Endothelial cell of umbilical vein (primary cell): ENCODE measurements at regions of chr6 and their contacts with region 1.

Region 1: GRCh38 chr6:137799950-137800568 is 67.0 kb upstream of the TNFAIP3 start:
- DNase-seq: peak; percentile 68
- H3K4me3 ChIP-seq: no peak overlapping the region
- H3K27ac ChIP-seq: no peak overlapping the region
- H3K4me1 ChIP-seq: no peaks in the 10 kb centered on the region
- H3K27me3 ChIP-seq: no peaks in the 10 kb centered on the region
- CTCF ChIP-seq: peak; percentile 53 to 66
- POLR2A ChIP-seq: no peak

Region 2: GRCh38 chr6:137775720-137776119 is 24.3 kb before region 1 on chr6:
- CTCF ChIA-PET with region 1: interaction called, 10 read pairs
- POLR2A ChIA-PET with region 1: no interaction called
- dilution Hi-C with region 1: no loop called
- intact Hi-C with region 1: no loop called
- DNase-seq: peak; percentile 94
- H3K4me3 ChIP-seq: no peak overlapping the region
- H3K27ac ChIP-seq: peak overlapping the region; percentile 56
- H3K4me1 ChIP-seq: peaks cover 23% of the 10 kb centered on the region
- H3K27me3 ChIP-seq: no peaks in the 10 kb centered on the region
- CTCF ChIP-seq: no peak
- POLR2A ChIP-seq: no peak

Region 3: DNA sequence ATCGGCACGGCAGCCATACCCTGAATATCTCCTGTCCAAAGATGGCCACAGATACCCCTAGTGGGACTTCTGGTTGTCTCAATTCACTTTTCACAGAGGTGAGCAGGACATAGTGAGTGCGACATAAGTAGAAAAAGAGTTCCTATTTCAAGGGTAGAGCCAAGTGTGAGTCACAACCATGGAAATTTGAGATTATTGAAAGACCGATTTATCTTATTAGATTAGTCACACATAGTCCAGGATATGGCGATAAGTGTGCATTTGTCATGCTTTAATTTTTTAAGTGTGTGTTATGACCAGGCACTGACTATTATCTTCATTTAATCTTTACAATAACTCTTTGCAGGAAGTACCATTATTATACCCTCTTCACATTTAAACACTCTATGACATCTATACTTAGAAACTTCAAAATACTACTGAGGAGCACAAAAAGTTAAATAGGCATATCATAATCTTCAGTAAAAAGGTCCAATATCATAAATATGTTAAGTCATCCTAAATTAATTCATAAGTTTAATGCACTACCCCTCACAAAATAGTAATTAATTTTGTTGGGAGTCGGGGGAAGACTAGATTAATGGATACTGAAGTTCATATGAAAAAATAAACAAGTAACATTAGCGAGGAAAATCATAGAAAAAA is 53.6 kb after region 1 on chr6:
- CTCF ChIA-PET with region 1: interaction called, 5 read pairs
- POLR2A ChIA-PET with region 1: no interaction called
- dilution Hi-C with region 1: no loop called
- intact Hi-C with region 1: loop called (anchors 2 kb)
- DNase-seq: peak; percentile 82
- H3K4me3 ChIP-seq: no peak overlapping the region
- H3K27ac ChIP-seq: no peak overlapping the region
- H3K4me1 ChIP-seq: peaks cover 14% of the 10 kb centered on the region
- H3K27me3 ChIP-seq: no peaks in the 10 kb centered on the region
- CTCF ChIP-seq: no peak
- POLR2A ChIP-seq: no peak

Region 4: DNA sequence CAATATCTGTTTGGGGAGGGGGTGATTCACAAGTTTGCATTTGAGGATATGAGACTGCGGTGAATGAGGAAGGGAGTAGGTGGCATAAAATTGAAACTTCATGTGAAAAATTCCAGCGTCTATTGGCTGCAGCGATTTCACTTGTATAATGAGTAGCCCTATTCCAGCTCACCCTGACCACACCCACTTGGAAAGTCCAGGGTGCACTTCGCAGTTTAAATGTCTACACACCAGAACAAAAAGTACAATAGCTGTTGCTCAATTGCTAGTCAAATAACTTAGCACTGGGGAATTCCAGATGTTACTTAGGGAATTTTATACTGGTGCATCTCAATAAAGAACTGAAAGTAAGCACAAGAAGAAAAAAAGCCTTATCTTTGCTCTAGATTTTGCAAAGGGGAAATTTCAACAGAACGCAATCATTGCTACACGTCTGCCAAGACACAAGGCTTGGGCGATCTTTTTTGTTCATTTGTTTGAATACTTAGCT is 73.3 kb after region 1 on chr6:
- CTCF ChIA-PET with region 1: interaction called, 30 read pairs
- POLR2A ChIA-PET with region 1: no interaction called
- dilution Hi-C with region 1: no loop called
- intact Hi-C with region 1: no loop called
- DNase-seq: peak; percentile 88
- H3K4me3 ChIP-seq: no peak overlapping the region
- H3K27ac ChIP-seq: peak overlapping the region; percentile 53
- H3K4me1 ChIP-seq: peaks cover 41% of the 10 kb centered on the region
- H3K27me3 ChIP-seq: no peaks in the 10 kb centered on the region
- CTCF ChIP-seq: no peak
- POLR2A ChIP-seq: peak; percentile 22

Region 5: GRCh38 chr6:137944793-137945498 is 144.9 kb after region 1 on chr6:
- CTCF ChIA-PET with region 1: interaction called, 50 read pairs
- POLR2A ChIA-PET with region 1: no interaction called
- dilution Hi-C with region 1: no loop called
- intact Hi-C with region 1: loop called (anchors 1 kb)
- DNase-seq: peak; percentile 56
- H3K4me3 ChIP-seq: no peak overlapping the region
- H3K27ac ChIP-seq: no peak overlapping the region
- H3K4me1 ChIP-seq: no peaks in the 10 kb centered on the region
- H3K27me3 ChIP-seq: no peaks in the 10 kb centered on the region
- CTCF ChIP-seq: peak; percentile 58 to 59
- POLR2A ChIP-seq: no peak

Region 6: GRCh38 chr6:138240476-138241245 is 440.6 kb after region 1 on chr6:
- CTCF ChIA-PET with region 1: no interaction called
- POLR2A ChIA-PET with region 1: no interaction called
- dilution Hi-C with region 1: no loop called
- intact Hi-C with region 1: no loop called
- DNase-seq: no peak
- H3K4me3 ChIP-seq: no peak overlapping the region
- H3K27ac ChIP-seq: no peak overlapping the region
- H3K4me1 ChIP-seq: no peaks in the 10 kb centered on the region
- H3K27me3 ChIP-seq: no peaks in the 10 kb centered on the region
- CTCF ChIP-seq: no peak
- POLR2A ChIP-seq: no peak